ENCODE measurements at regions of chr12 and their contacts with region 1.

Region 1: GRCh38 chr12:44143175-44143574 is 307.3 kb downstream of the TMEM117 start:
- DNase-seq: no peak
- H3K4me3 ChIP-seq: no peak overlapping the region
- H3K27ac ChIP-seq: no peak overlapping the region
- H3K4me1 ChIP-seq: no peaks in the 10 kb centered on the region
- CTCF ChIP-seq: no peak

Region 2: GRCh38 chr12:43869184-43869583 is 274.0 kb before region 1 on chr12:
- CTCF ChIA-PET with region 1: no interaction called
- POLR2A ChIA-PET with region 1: no interaction called
- intact Hi-C with region 1: no loop called
- DNase-seq: no peak
- H3K4me3 ChIP-seq: no peak overlapping the region
- H3K27ac ChIP-seq: no peak overlapping the region
- H3K4me1 ChIP-seq: no peaks in the 10 kb centered on the region
- CTCF ChIP-seq: no peak

Region 3: DNA sequence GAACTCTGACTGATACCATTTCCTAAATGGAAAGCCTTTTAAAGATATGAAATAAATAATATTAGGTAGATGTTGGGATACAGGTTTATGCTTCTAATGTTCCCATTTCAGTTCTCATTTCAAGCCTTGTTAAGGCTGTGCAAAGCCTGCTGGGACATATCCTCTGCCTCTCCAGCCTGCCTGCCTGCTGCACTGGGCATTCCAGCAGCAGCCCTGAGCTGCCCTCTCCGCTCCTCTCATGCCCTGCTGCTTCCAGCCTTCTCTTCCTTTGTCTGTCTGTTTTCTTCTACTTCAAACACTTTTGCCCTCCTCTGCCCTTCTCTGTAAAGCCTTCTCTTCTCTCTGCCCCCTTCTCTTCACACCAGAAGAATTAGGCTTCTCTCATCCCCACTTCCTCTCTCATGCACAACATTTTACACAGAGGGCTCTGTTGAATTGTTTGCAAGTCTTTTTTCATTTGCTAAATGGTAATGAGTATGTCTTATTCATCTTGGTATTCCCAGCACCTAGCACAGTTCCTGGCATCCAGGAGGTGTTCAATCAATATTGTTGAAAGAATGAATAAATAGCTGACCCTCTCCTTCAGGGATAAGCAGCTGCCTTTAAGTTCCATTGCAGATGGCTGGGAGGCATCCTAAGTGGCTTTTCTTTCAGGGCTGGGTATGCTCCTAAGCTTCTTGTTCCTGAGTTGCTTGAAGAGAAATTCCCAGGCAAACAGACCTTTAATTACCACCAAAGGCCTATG is 15.0 kb before region 1 on chr12:
- CTCF ChIA-PET with region 1: no interaction called
- POLR2A ChIA-PET with region 1: interaction called, 5 read pairs
- intact Hi-C with region 1: loop called (anchors 1 kb)
- DNase-seq: no peak
- H3K4me3 ChIP-seq: no peak overlapping the region
- H3K27ac ChIP-seq: no peak overlapping the region
- H3K4me1 ChIP-seq: no peaks in the 10 kb centered on the region
- CTCF ChIP-seq: no peak

Measured in OCI-LY7 (cell line).